ENCODE measurements at regions of chr10 and their contacts with region 1.

Region 1: DNA sequence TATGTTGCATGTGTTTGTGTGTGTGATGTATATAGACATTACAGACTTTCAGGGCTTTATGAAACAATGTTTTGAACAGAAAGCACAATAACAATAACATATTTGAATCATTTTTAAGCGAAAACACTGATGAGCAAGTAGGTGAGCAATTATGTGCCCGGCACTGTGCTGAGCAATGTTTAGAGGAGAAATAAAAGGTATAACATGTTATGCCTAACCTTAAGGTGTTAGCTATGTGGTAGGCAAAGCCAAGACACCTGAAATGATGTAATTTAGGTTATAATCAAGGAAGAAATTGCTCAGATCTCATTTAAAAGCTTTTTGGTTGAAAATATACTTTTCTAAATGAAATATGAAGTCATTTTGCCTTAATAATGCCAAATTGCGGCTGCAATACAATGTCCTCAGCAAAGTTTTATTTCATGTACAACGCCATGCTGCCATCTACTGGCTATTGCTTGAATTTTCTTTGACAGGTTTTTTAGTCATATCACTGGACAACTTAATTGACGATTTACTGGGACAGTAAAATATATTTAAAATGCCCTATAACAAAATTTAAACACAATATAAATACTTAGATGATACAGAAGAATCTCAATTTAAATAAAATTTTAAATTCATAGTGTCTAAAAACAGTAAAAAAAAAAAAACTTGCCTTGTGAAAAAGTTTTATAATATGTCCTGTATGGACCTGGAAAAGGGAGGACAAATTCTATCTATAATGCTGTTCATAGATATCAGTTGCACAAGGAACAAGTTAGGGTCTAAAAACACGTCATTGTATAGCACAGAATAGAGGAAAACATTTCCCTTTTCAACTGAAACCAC is 131.1 kb upstream of the CDK1 start:
- DNase-seq: peak in 6 of 9 experiments; percentile 10 to 65 (median 34)
- ATAC-seq: no peak
- H3K4me3 ChIP-seq: no peak overlapping the region
- H3K4me3 Mint-ChIP-seq: no peak overlapping the region
- H3K27ac ChIP-seq: no peak overlapping the region
- H3K27ac Mint-ChIP-seq: no peak overlapping the region
- H3K4me1 ChIP-seq: no peaks in the 10 kb centered on the region
- H3K4me1 Mint-ChIP-seq: peaks cover 2% of the 10 kb centered on the region
- H3K27me3 ChIP-seq: no peaks in the 10 kb centered on the region
- H3K27me3 Mint-ChIP-seq: peaks cover 4% of the 10 kb centered on the region
- CTCF ChIP-seq: peak; percentile 88

Region 2: GRCh38 chr10:58781873-58782488 is 1865.2 kb before region 1 on chr10:
- CTCF ChIA-PET with region 1: interaction called, 3 read pairs
- POLR2A ChIA-PET with region 1: no interaction called
- intact Hi-C with region 1: loop called in 1 of 2 experiments (anchors 5 kb)
- DNase-seq: peak in 2 of 9 experiments; percentile 14 to 21
- ATAC-seq: no peak
- H3K4me3 ChIP-seq: no peak overlapping the region
- H3K4me3 Mint-ChIP-seq: no peak overlapping the region
- H3K27ac ChIP-seq: no peak overlapping the region
- H3K27ac Mint-ChIP-seq: no peak overlapping the region
- H3K4me1 ChIP-seq: no peaks in the 10 kb centered on the region
- H3K4me1 Mint-ChIP-seq: no peaks in the 10 kb centered on the region
- H3K27me3 ChIP-seq: no peaks in the 10 kb centered on the region
- H3K27me3 Mint-ChIP-seq: no peaks in the 10 kb centered on the region
- CTCF ChIP-seq: peak; percentile 45

Region 3: DNA sequence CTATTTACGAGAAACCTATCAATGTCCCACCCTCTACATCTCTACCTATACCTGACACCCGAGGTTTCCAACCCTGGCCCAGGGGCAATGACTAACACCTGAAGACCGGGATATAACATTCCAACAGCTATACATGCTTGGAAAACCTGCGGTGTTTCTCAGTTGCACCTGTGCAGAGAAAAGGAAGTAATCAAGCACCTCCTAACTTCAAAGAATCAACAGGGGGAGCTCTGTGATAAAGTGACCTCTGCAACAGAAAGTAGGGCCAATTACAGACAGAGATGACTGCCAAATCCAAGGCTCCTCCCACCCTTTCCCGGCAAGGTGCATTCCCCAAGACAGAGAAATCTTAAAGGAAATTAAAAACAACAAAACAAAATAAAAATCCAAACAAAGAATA is 782.1 kb before region 1 on chr10:
- CTCF ChIA-PET with region 1: no interaction called
- POLR2A ChIA-PET with region 1: no interaction called
- intact Hi-C with region 1: loop called in 1 of 2 experiments (anchors 10 kb)
- DNase-seq: peak in 2 of 9 experiments; percentile 44 to 60
- ATAC-seq: peak; percentile 35
- H3K4me3 ChIP-seq: no peak overlapping the region
- H3K4me3 Mint-ChIP-seq: peak overlapping the region; percentile 5
- H3K27ac ChIP-seq: no peak overlapping the region
- H3K27ac Mint-ChIP-seq: peak overlapping the region; percentile 46
- H3K4me1 ChIP-seq: peaks cover 24% of the 10 kb centered on the region
- H3K4me1 Mint-ChIP-seq: peaks cover 63% of the 10 kb centered on the region
- H3K27me3 ChIP-seq: no peaks in the 10 kb centered on the region
- H3K27me3 Mint-ChIP-seq: no peaks in the 10 kb centered on the region
- CTCF ChIP-seq: peak; percentile 24

Region 4: DNA sequence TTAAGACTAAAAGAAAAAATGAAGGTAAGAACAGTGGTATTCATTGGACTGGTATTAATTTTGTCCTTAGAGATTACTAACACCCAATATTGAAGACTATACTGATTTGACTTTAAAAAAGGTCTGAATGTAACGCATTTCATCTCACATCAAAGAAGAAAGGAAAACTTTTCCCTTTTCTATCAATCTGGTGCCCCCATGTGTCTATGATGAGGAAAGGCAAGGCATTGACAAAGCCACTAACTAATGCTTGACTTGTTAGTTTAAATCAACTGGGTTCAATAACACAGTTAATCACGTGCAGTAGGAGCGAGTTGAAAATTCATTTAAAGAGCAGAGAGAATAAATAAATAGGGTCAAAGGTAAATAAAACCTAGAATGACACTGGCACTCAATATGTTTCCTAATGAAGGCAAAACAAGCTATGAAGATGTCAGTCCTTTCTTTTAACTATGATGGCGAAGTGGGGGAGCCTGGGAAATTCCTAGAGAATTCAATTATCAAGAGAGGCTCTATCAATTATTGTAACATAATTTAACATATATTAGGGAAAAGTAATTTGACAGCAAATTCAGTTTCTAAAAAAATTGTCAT is 438.4 kb before region 1 on chr10:
- CTCF ChIA-PET with region 1: interaction called, 4 read pairs
- POLR2A ChIA-PET with region 1: no interaction called
- intact Hi-C with region 1: loop called in 1 of 2 experiments (anchors 5 kb)
- DNase-seq: peak in 1 of 9 experiments; percentile 18
- ATAC-seq: no peak
- H3K4me3 ChIP-seq: no peak overlapping the region
- H3K4me3 Mint-ChIP-seq: no peak overlapping the region
- H3K27ac ChIP-seq: no peak overlapping the region
- H3K27ac Mint-ChIP-seq: no peak overlapping the region
- H3K4me1 ChIP-seq: no peaks in the 10 kb centered on the region
- H3K4me1 Mint-ChIP-seq: peaks cover 16% of the 10 kb centered on the region
- H3K27me3 ChIP-seq: no peaks in the 10 kb centered on the region
- H3K27me3 Mint-ChIP-seq: peaks cover 6% of the 10 kb centered on the region
- CTCF ChIP-seq: no peak

Region 5: GRCh38 chr10:60733189-60733822 is 86.1 kb after region 1 on chr10:
- CTCF ChIA-PET with region 1: no interaction called
- POLR2A ChIA-PET with region 1: no interaction called
- intact Hi-C with region 1: loop called in 1 of 2 experiments (anchors 5 kb)
- DNase-seq: peak in 6 of 9 experiments; percentile 27 to 64 (median 46)
- ATAC-seq: peak; percentile 72
- H3K4me3 ChIP-seq: peak overlapping the region; percentile 45 to 58
- H3K4me3 Mint-ChIP-seq: peak overlapping the region; percentile 91
- H3K27ac ChIP-seq: peak overlapping the region; percentile 39 to 59
- H3K27ac Mint-ChIP-seq: peak overlapping the region; percentile 34
- H3K4me1 ChIP-seq: peaks cover 22% of the 10 kb centered on the region
- H3K4me1 Mint-ChIP-seq: peaks cover 32% of the 10 kb centered on the region
- H3K27me3 ChIP-seq: no peaks in the 10 kb centered on the region
- H3K27me3 Mint-ChIP-seq: peaks cover 25% of the 10 kb centered on the region
- CTCF ChIP-seq: peak; percentile 52

Measured in CD8-positive, alpha-beta T cell (primary cell).